ENCODE measurements at regions of chr3 and their contacts with region 1.

Region 1: DNA sequence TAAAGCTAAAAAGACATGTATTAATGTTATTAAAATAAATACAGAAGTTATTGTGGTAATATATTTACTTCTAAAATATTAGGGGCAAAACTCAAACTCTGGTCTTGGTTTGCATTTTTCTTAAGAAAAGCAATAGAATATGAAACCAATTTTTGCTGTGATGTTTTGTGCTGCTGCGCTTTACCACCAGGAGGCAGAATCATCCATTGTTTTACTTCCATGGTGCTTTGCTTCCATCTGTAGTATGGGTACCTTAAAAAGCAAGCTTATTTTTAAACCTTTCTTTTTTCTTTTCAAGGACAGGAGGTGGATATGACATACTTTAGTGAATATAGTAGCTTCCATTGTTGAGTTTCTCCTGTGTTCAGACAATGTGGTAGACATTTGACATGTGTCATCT is 46.6 kb upstream of the MRPL3 start:
- DNase-seq: peak; percentile 44
- H3K4me3 Mint-ChIP-seq: no peak overlapping the region
- H3K27ac Mint-ChIP-seq: no peak overlapping the region
- H3K4me1 Mint-ChIP-seq: peaks cover 4% of the 10 kb centered on the region
- H3K27me3 Mint-ChIP-seq: no peaks in the 10 kb centered on the region
- CTCF ChIP-seq: peak; percentile 67

Region 2: GRCh38 chr3:131421957-131422498 is 127.3 kb before region 1 on chr3:
- CTCF ChIA-PET with region 1: no interaction called
- intact Hi-C with region 1: no loop called
- DNase-seq: no peak
- H3K4me3 Mint-ChIP-seq: no peak overlapping the region
- H3K27ac Mint-ChIP-seq: no peak overlapping the region
- H3K4me1 Mint-ChIP-seq: no peaks in the 10 kb centered on the region
- H3K27me3 Mint-ChIP-seq: no peaks in the 10 kb centered on the region
- CTCF ChIP-seq: no peak

Region 3: GRCh38 chr3:131699001-131699400 is 149.7 kb after region 1 on chr3:
- CTCF ChIA-PET with region 1: no interaction called
- intact Hi-C with region 1: loop called (anchors 5 kb)
- DNase-seq: no peak
- H3K4me3 Mint-ChIP-seq: no peak overlapping the region
- H3K27ac Mint-ChIP-seq: no peak overlapping the region
- H3K4me1 Mint-ChIP-seq: no peaks in the 10 kb centered on the region
- H3K27me3 Mint-ChIP-seq: no peaks in the 10 kb centered on the region
- CTCF ChIP-seq: no peak

Measured in Calu3 (cell line).